ENCODE measurements at regions of chr6 and their contacts with region 1.

Region 1: GRCh38 chr6:160919723-160920440 is 71.7 kb upstream of the MAP3K4 start:
- DNase-seq: no peak
- ATAC-seq: no peak
- H3K4me3 ChIP-seq: no peak overlapping the region
- H3K27ac ChIP-seq: no peak overlapping the region
- H3K4me1 ChIP-seq: no peaks in the 10 kb centered on the region
- H3K27me3 ChIP-seq: no peaks in the 10 kb centered on the region
- CTCF ChIP-seq: no peak

Region 2: GRCh38 chr6:160733050-160733646 is 186.7 kb before region 1 on chr6:
- intact Hi-C with region 1: loop called in 1 of 10 experiments (anchors 10 kb)
- DNase-seq: peak in 1 of 2 donors; percentile 31
- ATAC-seq: peak in 6 of 8 donors; percentile 50 to 76 (median 68)
- H3K4me3 ChIP-seq: no peak overlapping the region
- H3K27ac ChIP-seq: no peak overlapping the region
- H3K4me1 ChIP-seq: no peaks in the 10 kb centered on the region
- H3K27me3 ChIP-seq: peaks cover 0 to 25% (median 4%) of the 10 kb centered on the region in 7 donors
- CTCF ChIP-seq: peak; percentile 31 to 73 (median 66)

Region 3: DNA sequence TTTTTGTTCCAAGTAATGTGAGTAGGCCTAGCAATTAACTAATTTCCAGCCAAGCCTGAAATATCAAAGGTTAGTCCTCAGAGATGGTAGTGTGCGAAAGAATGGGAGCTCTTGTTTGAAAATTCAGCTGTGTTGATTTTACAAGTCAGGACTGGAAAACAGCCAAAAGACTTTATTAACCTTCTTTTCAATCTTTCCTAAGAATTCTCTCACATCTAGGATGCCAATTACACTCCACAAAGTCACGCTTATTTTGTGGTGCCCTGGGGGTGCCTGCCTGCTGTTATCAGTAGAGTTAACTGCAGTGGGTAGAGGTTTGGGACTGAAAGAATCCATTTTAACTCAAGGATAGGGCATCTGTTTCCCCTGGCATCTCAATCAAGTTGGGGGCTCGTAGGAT is 41.0 kb after region 1 on chr6:
- intact Hi-C with region 1: no loop called
- DNase-seq: no peak
- ATAC-seq: no peak
- H3K4me3 ChIP-seq: no peak overlapping the region
- H3K27ac ChIP-seq: no peak overlapping the region
- H3K4me1 ChIP-seq: no peaks in the 10 kb centered on the region
- H3K27me3 ChIP-seq: peaks cover 0 to 7% (median 0%) of the 10 kb centered on the region in 7 donors
- CTCF ChIP-seq: no peak

Region 4: GRCh38 chr6:161079566-161080262 is 159.8 kb after region 1 on chr6:
- intact Hi-C with region 1: loop called in 2 of 10 experiments (anchors 10 kb)
- DNase-seq: no peak
- ATAC-seq: peak in 3 of 8 donors; percentile 29 to 66 (median 47)
- H3K4me3 ChIP-seq: no peak overlapping the region
- H3K27ac ChIP-seq: peak overlapping the region in 1 of 10 donors; percentile 11
- H3K4me1 ChIP-seq: peaks cover 0 to 18% (median 4%) of the 10 kb centered on the region in 9 donors
- H3K27me3 ChIP-seq: no peaks in the 10 kb centered on the region
- CTCF ChIP-seq: no peak